Spleen (tissue), 13 donors: ENCODE measurements at regions of chr4 and their contacts with region 1.

Region 1: DNA sequence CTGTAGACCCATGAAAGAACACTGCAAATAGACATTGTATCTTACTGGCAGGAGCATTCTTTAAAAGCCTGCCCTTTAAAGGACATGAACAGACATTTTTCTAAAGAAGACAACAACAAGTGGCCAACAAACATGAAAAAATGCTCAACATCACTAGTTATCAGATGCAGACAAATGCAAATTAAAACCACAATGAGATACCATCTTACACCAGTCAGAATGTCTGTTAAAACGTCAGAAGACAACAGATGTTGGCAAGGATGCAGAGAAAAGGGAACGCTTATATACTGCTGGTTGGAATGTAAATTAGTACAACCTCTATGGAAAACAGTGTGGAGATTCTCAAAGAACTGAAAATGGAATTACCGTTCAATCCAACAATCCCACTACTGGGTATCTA is 77.2 kb downstream of the ATP10D start:
- DNase-seq: no peak
- H3K4me3 ChIP-seq: no peak overlapping the region
- H3K27ac ChIP-seq: no peak overlapping the region
- H3K4me1 ChIP-seq: peaks cover 0 to 11% (median 8%) of the 10 kb centered on the region in 6 donors
- H3K27me3 ChIP-seq: no peaks in the 10 kb centered on the region
- CTCF ChIP-seq: no peak
- POLR2A ChIP-seq: no peak

Region 2: GRCh38 chr4:47463235-47463956 is 98.9 kb before region 1 on chr4 and contains the start of gene COMMD8:
- intact Hi-C with region 1: loop called (anchors 10 kb)
- DNase-seq: peak; percentile 100
- H3K4me3 ChIP-seq: peak within 1 kb of the TSS; percentile 79 to 93 (median 88)
- H3K27ac ChIP-seq: peak within 1 kb of the TSS; percentile 84 to 95 (median 90)
- H3K4me1 ChIP-seq: peaks cover 0 to 54% (median 22%) of the 10 kb centered on the region in 6 donors
- H3K27me3 ChIP-seq: no peaks in the 10 kb centered on the region
- CTCF ChIP-seq: peak; percentile 26 to 67 (median 55)
- POLR2A ChIP-seq: peak in 1 of 3 donors; percentile 24
- total RNA-seq, gene COMMD8: 14.1 to 21.1 (median 19.4) TPM